Activated naive CD4-positive, alpha-beta T cell treated with anti-CD3 and anti-CD28 coated beads for 36 hours (primary cell): ENCODE measurements at regions of chr18 and their contacts with region 1.

Region 1: GRCh38 chr18:13435596-13436327 is 217.2 kb downstream of the LDLRAD4 start:
- DNase-seq: no peak
- H3K4me3 Mint-ChIP-seq: no peak overlapping the region
- H3K27ac Mint-ChIP-seq: no peak overlapping the region
- H3K4me1 Mint-ChIP-seq: peaks cover 58% of the 10 kb centered on the region
- H3K27me3 Mint-ChIP-seq: no peaks in the 10 kb centered on the region

Region 2: DNA sequence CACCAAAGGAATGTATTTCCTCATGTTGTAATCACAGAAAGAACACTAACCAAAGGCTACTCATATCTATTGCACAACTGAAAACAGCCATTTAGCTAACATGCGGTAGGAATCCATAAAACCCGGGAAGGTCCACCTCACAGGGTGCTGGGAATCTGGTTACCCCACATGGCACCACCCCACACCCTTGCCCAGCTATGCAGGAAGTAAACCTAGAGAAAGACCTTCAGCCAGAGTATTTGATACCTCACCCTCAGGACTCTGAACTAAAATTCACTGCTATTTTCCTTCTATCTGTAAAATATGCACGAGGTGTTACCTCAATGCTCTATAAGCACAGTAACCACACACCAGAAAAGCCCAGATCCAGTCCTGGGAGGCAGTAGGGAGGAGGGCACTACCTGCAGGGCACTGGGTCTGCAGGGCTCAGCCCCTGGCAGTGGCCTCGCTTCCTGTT is 597.6 kb before region 1 on chr18:
- CTCF ChIA-PET with region 1: no interaction called
- intact Hi-C with region 1: loop called (anchors 5 kb)
- DNase-seq: no peak
- H3K4me3 Mint-ChIP-seq: peak overlapping the region; percentile 46
- H3K27ac Mint-ChIP-seq: peak overlapping the region; percentile 84
- H3K4me1 Mint-ChIP-seq: peaks cover 52% of the 10 kb centered on the region
- H3K27me3 Mint-ChIP-seq: no peaks in the 10 kb centered on the region

Region 3: DNA sequence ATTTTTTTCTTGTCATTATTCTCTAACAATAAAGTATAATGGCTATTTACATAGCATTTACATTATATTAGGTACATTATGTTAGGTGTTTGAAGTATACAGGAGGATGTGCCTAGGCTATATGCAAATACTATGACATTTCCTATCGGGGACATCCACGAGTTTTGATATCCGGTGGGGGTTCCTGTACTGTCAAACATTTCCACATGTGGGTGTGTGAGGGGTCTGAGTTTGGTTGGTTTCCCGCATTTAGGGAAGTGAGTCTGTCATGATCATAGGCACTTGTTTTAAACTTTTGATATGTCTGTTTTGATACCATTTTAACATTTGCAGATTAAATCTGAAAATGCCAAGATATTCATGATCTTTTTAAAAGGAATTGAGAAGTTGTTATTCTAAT is 368.6 kb before region 1 on chr18:
- CTCF ChIA-PET with region 1: no interaction called
- intact Hi-C with region 1: no loop called
- DNase-seq: peak; percentile 56
- H3K4me3 Mint-ChIP-seq: no peak overlapping the region
- H3K27ac Mint-ChIP-seq: peak overlapping the region; percentile 37
- H3K4me1 Mint-ChIP-seq: peaks cover 26% of the 10 kb centered on the region
- H3K27me3 Mint-ChIP-seq: no peaks in the 10 kb centered on the region

Region 4: GRCh38 chr18:13175754-13176210 is 260.0 kb before region 1 on chr18:
- CTCF ChIA-PET with region 1: no interaction called
- intact Hi-C with region 1: loop called (anchors 5 kb)
- DNase-seq: peak; percentile 72
- H3K4me3 Mint-ChIP-seq: no peak overlapping the region
- H3K27ac Mint-ChIP-seq: no peak overlapping the region
- H3K4me1 Mint-ChIP-seq: peaks cover 12% of the 10 kb centered on the region
- H3K27me3 Mint-ChIP-seq: no peaks in the 10 kb centered on the region

Region 5: GRCh38 chr18:13375302-13376255 is 60.2 kb before region 1 on chr18:
- CTCF ChIA-PET with region 1: interaction called, 4 read pairs
- intact Hi-C with region 1: loop called (anchors 1 kb)
- DNase-seq: peak; percentile 93
- H3K4me3 Mint-ChIP-seq: peak overlapping the region; percentile 32
- H3K27ac Mint-ChIP-seq: peak overlapping the region; percentile 86
- H3K4me1 Mint-ChIP-seq: peaks cover 81% of the 10 kb centered on the region
- H3K27me3 Mint-ChIP-seq: no peaks in the 10 kb centered on the region

Region 6: DNA sequence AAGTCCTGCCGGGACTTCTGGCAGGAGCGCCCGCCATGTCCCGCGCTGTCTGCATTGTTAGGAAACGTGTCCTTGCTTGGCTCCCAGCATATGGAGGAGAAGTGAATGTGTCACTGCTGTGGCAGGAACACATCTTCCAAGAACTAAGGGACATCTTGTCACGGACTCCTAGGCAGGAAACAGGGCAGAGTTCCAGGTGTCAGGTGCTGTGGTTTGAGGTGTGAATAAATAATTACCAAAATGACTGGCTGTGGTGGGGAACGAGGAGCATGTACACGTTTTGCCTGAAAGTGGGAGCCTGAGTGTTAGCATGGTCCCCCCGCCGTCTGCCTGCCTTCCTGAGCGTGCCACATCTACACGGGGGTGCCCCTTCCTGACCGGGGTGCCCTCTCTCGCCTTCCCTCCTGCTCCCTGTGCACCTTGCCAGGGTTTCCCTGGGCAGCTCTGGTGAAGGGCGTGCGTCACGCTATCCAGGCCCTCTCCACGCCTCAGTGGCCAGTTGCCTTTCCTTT is 20.3 kb after region 1 on chr18:
- CTCF ChIA-PET with region 1: no interaction called
- intact Hi-C with region 1: loop called (anchors 1 kb)
- DNase-seq: peak; percentile 85
- H3K4me3 Mint-ChIP-seq: peak overlapping the region; percentile 33
- H3K27ac Mint-ChIP-seq: no peak overlapping the region
- H3K4me1 Mint-ChIP-seq: peaks cover 25% of the 10 kb centered on the region
- H3K27me3 Mint-ChIP-seq: no peaks in the 10 kb centered on the region

Region 7: GRCh38 chr18:13539050-13539449 is 103.3 kb after region 1 on chr18:
- CTCF ChIA-PET with region 1: no interaction called
- intact Hi-C with region 1: loop called (anchors 5 kb)
- DNase-seq: peak; percentile 47
- H3K4me3 Mint-ChIP-seq: peak overlapping the region; percentile 17
- H3K27ac Mint-ChIP-seq: peak overlapping the region; percentile 43
- H3K4me1 Mint-ChIP-seq: peaks cover 48% of the 10 kb centered on the region
- H3K27me3 Mint-ChIP-seq: no peaks in the 10 kb centered on the region

Region 8: DNA sequence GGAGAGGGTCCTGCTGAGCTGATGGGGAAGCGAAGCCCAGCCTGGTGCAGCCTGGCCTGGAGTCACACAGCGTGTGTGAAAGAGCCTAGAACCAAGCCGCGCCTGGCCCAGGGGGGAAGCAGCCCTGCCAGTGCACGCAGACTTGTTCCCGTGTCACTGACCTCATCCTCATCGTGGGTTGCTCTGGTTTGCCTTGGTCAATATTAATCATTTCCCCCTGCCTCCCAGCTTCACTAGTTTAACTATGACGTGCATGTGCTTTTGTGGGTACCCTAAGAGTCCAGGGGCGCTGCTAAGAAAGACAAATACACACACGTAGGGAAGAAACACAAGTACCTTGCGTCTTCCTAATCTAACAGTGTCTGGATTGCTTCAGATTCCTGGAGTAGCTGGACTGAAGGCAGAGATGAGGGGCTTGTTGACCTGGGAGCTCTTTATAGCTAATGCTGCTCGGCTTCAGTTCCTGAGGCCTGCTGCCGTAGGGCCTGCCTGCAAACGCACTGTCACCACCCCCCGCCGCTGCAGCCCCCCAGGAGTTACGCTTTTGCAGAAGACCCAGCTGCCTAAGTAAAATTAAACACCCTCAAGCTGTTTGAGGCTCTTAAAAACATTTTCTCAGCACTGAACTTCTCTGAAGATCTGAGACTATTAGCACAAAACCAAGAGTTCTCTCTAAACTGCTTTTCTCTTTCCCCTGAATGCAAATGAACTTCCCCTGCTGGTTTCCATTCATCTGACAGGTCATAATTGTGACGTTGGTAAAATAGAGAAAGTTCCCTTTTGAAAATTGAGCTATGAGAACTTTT is 131.4 kb after region 1 on chr18:
- CTCF ChIA-PET with region 1: interaction called, 3 read pairs
- intact Hi-C with region 1: loop called (anchors 1 kb)
- DNase-seq: no peak
- H3K4me3 Mint-ChIP-seq: peak overlapping the region; percentile 7
- H3K27ac Mint-ChIP-seq: peak overlapping the region; percentile 68
- H3K4me1 Mint-ChIP-seq: peaks cover 68% of the 10 kb centered on the region
- H3K27me3 Mint-ChIP-seq: no peaks in the 10 kb centered on the region